Heart left ventricle (tissue), 16 donors: ENCODE measurements at regions of chr7 and their contacts with region 1.

Region 1: DNA sequence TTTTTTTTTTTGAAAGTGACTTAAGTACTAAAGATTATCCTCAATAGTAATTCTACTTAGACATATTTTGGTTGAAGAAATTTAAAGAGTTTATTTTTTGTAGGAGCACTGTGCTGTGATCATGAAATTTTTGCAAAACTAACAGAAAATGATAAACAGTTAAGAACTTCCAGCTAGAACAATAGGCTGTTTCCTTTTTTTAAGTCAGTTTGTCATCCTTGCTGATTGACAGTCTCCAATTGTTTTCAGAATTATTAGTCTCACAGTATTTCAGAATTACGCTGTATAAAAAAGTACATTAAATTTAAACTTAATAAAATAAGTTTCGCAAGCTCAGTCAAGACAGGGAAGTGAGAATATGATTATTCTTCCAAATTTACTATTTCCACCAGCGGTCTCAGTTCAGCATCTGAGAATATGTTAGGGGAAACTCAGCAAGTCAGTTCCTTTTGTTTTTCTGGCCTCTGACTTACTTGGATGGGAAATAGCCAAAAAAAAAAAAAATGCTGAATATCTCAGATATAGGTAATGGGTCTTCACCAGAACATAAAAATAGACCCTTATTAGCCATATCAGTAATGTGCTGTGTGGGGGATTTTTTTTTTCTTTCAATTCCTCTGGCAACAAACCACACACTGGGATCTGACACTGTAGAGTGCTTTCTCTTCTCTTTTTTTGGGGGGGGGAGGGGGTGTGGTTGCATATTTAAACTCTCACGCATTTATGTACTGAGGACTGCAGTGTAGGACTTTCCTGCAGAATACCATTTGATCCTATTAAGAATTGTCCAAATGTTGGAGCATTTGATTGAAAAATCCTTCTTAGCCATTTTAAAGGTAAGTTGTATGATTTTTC is at the start of gene CD36:
- DNase-seq: peak in 2 of 5 donors; percentile 38 to 58
- ATAC-seq: peak; percentile 45 to 70 (median 64)
- H3K4me3 ChIP-seq: peak within 1 kb of the TSS; percentile 28 to 67 (median 54)
- H3K27ac ChIP-seq: peak within 1 kb of the TSS; percentile 64 to 87 (median 84)
- H3K4me1 ChIP-seq: peaks cover 0 to 71% (median 32%) of the 10 kb centered on the region in 12 donors
- H3K27me3 ChIP-seq: no peaks in the 10 kb centered on the region
- CTCF ChIP-seq: no peak
- POLR2A ChIP-seq: peak in 1 of 2 donors; percentile 48
- total RNA-seq, gene CD36: 891 to 1,960 (median 1,108) TPM

Region 2: DNA sequence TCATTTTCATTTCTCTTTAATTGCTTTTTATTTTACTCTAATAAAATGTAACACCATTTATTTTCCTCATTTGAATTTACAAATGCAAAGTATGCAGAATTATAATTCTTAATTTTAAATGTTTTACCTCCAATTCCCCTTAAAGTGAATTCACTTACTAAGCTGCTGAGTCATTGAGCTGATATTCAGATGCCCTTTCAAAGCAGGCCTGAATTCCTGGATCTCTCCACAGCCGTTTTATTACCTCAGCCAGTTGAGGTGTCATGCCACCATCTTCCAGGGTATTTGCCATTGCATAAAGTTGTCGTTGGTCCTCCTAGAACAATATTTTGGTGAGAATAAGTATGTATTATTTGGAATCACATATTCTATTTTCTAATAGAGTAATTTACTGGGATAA is 159.5 kb before region 1 on chr7:
- intact Hi-C with region 1: loop called in 1 of 10 experiments (anchors 10 kb)
- DNase-seq: no peak
- ATAC-seq: peak in 2 of 4 donors; percentile 45 to 74
- H3K4me3 ChIP-seq: no peak overlapping the region
- H3K27ac ChIP-seq: peak overlapping the region in 1 of 12 donors; percentile 10
- H3K4me1 ChIP-seq: peaks cover 0 to 41% (median 25%) of the 10 kb centered on the region in 12 donors
- H3K27me3 ChIP-seq: no peaks in the 10 kb centered on the region
- CTCF ChIP-seq: no peak
- POLR2A ChIP-seq: no peak

Region 3: GRCh38 chr7:80499350-80499953 is 138.7 kb before region 1 on chr7:
- intact Hi-C with region 1: loop called in 1 of 10 experiments (anchors 5 kb)
- DNase-seq: peak in 4 of 5 donors; percentile 36 to 72 (median 40)
- ATAC-seq: peak; percentile 80 to 93 (median 84)
- H3K4me3 ChIP-seq: no peak overlapping the region
- H3K27ac ChIP-seq: peak overlapping the region; percentile 18 to 83 (median 70)
- H3K4me1 ChIP-seq: peaks cover 3 to 42% (median 26%) of the 10 kb centered on the region in 12 donors
- H3K27me3 ChIP-seq: no peaks in the 10 kb centered on the region
- CTCF ChIP-seq: no peak
- POLR2A ChIP-seq: no peak

Region 4: DNA sequence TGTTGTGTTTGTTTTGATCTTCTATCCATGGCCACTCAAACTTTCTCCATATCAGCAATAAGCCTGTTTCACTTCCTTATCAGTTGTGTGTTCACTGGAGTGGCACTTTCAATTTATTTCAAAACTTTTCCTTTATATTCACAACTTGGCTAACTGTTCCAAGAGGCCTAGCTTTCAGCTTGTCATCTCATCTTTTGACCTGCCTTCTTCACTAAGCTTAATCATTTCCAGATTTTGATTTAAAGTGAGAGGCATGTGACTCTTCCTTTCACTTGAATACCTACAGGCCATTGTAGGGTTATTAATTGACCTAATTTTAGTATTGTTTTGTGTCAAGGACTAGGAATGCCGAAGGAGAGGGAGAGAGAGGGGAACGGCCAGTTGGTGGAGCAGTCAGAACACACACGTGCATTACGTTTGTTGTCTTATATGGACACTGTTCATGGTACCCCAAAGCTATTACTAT is 120.8 kb before region 1 on chr7:
- intact Hi-C with region 1: loop called in 1 of 10 experiments (anchors 10 kb)
- DNase-seq: peak in 1 of 5 donors; percentile 31
- ATAC-seq: peak; percentile 64 to 78 (median 70)
- H3K4me3 ChIP-seq: no peak overlapping the region
- H3K27ac ChIP-seq: peak overlapping the region in 7 of 12 donors; percentile 0 to 63 (median 31)
- H3K4me1 ChIP-seq: peaks cover 0 to 18% (median 13%) of the 10 kb centered on the region in 12 donors
- H3K27me3 ChIP-seq: no peaks in the 10 kb centered on the region
- CTCF ChIP-seq: peak in 8 of 12 donors; percentile 14 to 59 (median 34)
- POLR2A ChIP-seq: no peak

Region 5: DNA sequence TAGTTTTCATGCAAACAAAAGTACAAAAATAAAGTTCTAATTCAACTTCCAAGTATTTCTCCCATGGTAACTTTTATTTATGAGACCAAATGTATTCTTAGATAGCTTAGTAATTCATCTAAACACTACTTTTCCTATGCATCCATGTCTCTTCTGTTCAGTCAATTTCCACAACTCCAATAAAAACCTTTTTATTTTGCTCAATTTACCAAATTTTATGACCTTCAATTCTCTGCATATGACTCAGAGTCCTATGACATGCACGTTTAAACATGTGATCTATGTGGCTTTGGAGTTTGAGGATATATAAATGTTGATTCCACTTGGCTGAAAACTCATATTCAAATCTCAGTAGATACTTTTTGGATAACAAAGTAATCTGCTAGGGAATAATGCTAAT is 85.8 kb before region 1 on chr7:
- intact Hi-C with region 1: loop called in 2 of 10 experiments (anchors 5 kb)
- DNase-seq: no peak
- ATAC-seq: no peak
- H3K4me3 ChIP-seq: no peak overlapping the region
- H3K27ac ChIP-seq: peak overlapping the region in 8 of 12 donors; percentile 19 to 78 (median 50)
- H3K4me1 ChIP-seq: peaks cover 7 to 45% (median 31%) of the 10 kb centered on the region in 12 donors
- H3K27me3 ChIP-seq: no peaks in the 10 kb centered on the region
- CTCF ChIP-seq: no peak
- POLR2A ChIP-seq: no peak

Region 6: GRCh38 chr7:80593869-80594582 is 44.1 kb before region 1 on chr7:
- intact Hi-C with region 1: loop called in 2 of 10 experiments (anchors 5 to 10 kb)
- DNase-seq: peak in 3 of 5 donors; percentile 48 to 69 (median 54)
- ATAC-seq: peak; percentile 66 to 88 (median 80)
- H3K4me3 ChIP-seq: peak overlapping the region in 1 of 12 donors; percentile 47
- H3K27ac ChIP-seq: peak overlapping the region; percentile 48 to 83 (median 69)
- H3K4me1 ChIP-seq: peaks cover 8 to 68% (median 32%) of the 10 kb centered on the region in 12 donors
- H3K27me3 ChIP-seq: no peaks in the 10 kb centered on the region
- CTCF ChIP-seq: no peak
- POLR2A ChIP-seq: peak in 1 of 2 donors; percentile 10

Region 7: GRCh38 chr7:80604436-80604835 is 33.7 kb before region 1 on chr7:
- intact Hi-C with region 1: loop called in 7 of 10 experiments (anchors 2 to 10 kb)
- DNase-seq: no peak
- ATAC-seq: peak; percentile 89 to 92 (median 91)
- H3K4me3 ChIP-seq: peak overlapping the region in 9 of 12 donors; percentile 6 to 59 (median 48)
- H3K27ac ChIP-seq: peak overlapping the region; percentile 56 to 84 (median 76)
- H3K4me1 ChIP-seq: peaks cover 0 to 60% (median 18%) of the 10 kb centered on the region in 12 donors
- H3K27me3 ChIP-seq: no peaks in the 10 kb centered on the region
- CTCF ChIP-seq: no peak
- POLR2A ChIP-seq: no peak

Region 8: GRCh38 chr7:81029511-81029910 is 391.4 kb after region 1 on chr7:
- intact Hi-C with region 1: no loop called
- DNase-seq: no peak
- ATAC-seq: no peak
- H3K4me3 ChIP-seq: no peak overlapping the region
- H3K27ac ChIP-seq: peak overlapping the region in 1 of 12 donors; percentile 19
- H3K4me1 ChIP-seq: no peaks in the 10 kb centered on the region
- H3K27me3 ChIP-seq: no peaks in the 10 kb centered on the region
- CTCF ChIP-seq: no peak
- POLR2A ChIP-seq: no peak